ENCODE measurements at regions of chr14 and their contacts with region 1.

Region 1: GRCh38 chr14:89430391-89431236 is 13.6 kb upstream of the FOXN3 start:
- DNase-seq: no peak
- H3K4me3 ChIP-seq: peak overlapping the region; percentile 9 to 48 (median 31)
- H3K27ac ChIP-seq: peak overlapping the region; percentile 79 to 85 (median 84)
- H3K4me1 ChIP-seq: peaks cover 29 to 61% (median 37%) of the 10 kb centered on the region in 3 donors
- H3K27me3 ChIP-seq: no peaks in the 10 kb centered on the region
- CTCF ChIP-seq: no peak
- POLR2A ChIP-seq: no peak

Region 2: GRCh38 chr14:89040460-89041259 is 390.0 kb before region 1 on chr14:
- intact Hi-C with region 1: no loop called
- DNase-seq: no peak
- H3K4me3 ChIP-seq: peak overlapping the region; percentile 30 to 63 (median 44)
- H3K27ac ChIP-seq: peak overlapping the region; percentile 69 to 92 (median 84)
- H3K4me1 ChIP-seq: peaks cover 9 to 17% (median 12%) of the 10 kb centered on the region in 3 donors
- H3K27me3 ChIP-seq: no peaks in the 10 kb centered on the region
- CTCF ChIP-seq: peak; percentile 84 to 96 (median 94)
- POLR2A ChIP-seq: no peak

Region 3: GRCh38 chr14:89578156-89578555 is 147.5 kb after region 1 on chr14:
- intact Hi-C with region 1: no loop called
- DNase-seq: no peak
- H3K4me3 ChIP-seq: no peak overlapping the region
- H3K27ac ChIP-seq: peak overlapping the region in 2 of 4 donors; percentile 9 to 39
- H3K4me1 ChIP-seq: peaks cover 0 to 3% (median 0%) of the 10 kb centered on the region in 3 donors
- H3K27me3 ChIP-seq: no peaks in the 10 kb centered on the region
- CTCF ChIP-seq: no peak
- POLR2A ChIP-seq: no peak

Region 4: GRCh38 chr14:89625244-89625713 is 194.7 kb after region 1 on chr14:
- intact Hi-C with region 1: loop called (anchors 10 kb)
- DNase-seq: no peak
- H3K4me3 ChIP-seq: peak overlapping the region in 1 of 4 donors; percentile 34
- H3K27ac ChIP-seq: no peak overlapping the region
- H3K4me1 ChIP-seq: peaks cover 9 to 47% (median 20%) of the 10 kb centered on the region in 3 donors
- H3K27me3 ChIP-seq: no peaks in the 10 kb centered on the region
- CTCF ChIP-seq: no peak
- POLR2A ChIP-seq: no peak

Region 5: GRCh38 chr14:89748004-89748403 is 317.4 kb after region 1 on chr14:
- intact Hi-C with region 1: no loop called
- DNase-seq: no peak
- H3K4me3 ChIP-seq: no peak overlapping the region
- H3K27ac ChIP-seq: no peak overlapping the region
- H3K4me1 ChIP-seq: peaks cover 0 to 6% (median 4%) of the 10 kb centered on the region in 3 donors
- H3K27me3 ChIP-seq: no peaks in the 10 kb centered on the region
- CTCF ChIP-seq: no peak
- POLR2A ChIP-seq: no peak

Measured in esophagus squamous epithelium (tissue), 5 donors.